Activated CD8-positive, alpha-beta memory T cell treated with anti-CD3 and anti-CD28 coated beads, Interleukin-2, amount 10 ng/mL, durations not matched to agents 7 days and 5 days (primary cell): ENCODE measurements at regions of chr1 and their contacts with region 1.

Region 1: DNA sequence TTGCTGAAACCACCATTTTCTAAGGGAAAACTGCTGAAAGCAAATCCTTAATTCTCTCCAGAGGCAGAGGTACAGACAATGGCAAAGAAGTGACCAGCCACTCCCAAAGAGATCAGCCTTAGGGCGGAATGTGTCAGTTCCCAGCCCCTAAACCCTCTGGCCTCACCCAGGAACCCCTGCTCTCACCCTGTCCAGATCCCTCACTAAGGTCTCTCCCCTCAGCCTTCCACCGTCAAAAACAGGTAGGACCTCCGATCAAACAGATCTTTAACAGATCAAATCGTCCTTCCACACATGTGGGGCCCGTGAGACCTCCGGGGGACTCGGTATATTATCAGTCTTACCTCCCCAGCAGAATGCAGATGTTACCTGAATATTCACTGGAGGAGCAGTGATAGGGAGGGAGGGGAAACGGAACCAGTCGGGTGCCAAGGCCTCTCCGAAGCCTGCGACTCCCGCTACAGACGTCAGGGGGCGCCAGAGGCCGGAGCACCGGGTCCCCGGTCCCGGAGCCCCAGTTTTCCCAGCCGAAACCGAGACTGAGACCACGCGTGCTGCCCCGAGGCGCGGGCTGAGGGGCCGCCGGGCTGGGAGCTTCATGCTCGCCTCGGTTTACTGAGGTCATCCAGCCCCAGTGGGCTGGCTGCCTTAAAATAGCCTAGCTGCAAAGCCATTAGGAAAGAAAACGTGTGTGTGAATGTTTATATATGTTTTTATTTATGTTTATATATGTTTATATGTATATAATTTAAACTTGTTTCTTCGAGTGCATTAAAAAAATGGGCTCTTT is 23.6 kb downstream of the GPA33 start:
- DNase-seq: peak; percentile 82
- ATAC-seq: peak; percentile 94
- H3K4me3 Mint-ChIP-seq: no peak overlapping the region
- H3K27ac Mint-ChIP-seq: no peak overlapping the region
- H3K4me1 Mint-ChIP-seq: peaks cover 4% of the 10 kb centered on the region
- H3K27me3 Mint-ChIP-seq: no peaks in the 10 kb centered on the region

Region 2: GRCh38 chr1:166875734-166876539 is 190.6 kb before region 1 on chr1 and contains the start of gene TADA1:
- CTCF ChIA-PET with region 1: interaction called, 222 read pairs
- DNase-seq: peak; percentile 99
- ATAC-seq: peak; percentile 93
- H3K4me3 Mint-ChIP-seq: peak within 1 kb of the TSS; percentile 82
- H3K27ac Mint-ChIP-seq: peak within 1 kb of the TSS; percentile 98
- H3K4me1 Mint-ChIP-seq: peaks cover 49% of the 10 kb centered on the region
- H3K27me3 Mint-ChIP-seq: peaks cover 7% of the 10 kb centered on the region
- total RNA-seq, gene TADA1: 18.1 to 18.8 TPM

Region 3: DNA sequence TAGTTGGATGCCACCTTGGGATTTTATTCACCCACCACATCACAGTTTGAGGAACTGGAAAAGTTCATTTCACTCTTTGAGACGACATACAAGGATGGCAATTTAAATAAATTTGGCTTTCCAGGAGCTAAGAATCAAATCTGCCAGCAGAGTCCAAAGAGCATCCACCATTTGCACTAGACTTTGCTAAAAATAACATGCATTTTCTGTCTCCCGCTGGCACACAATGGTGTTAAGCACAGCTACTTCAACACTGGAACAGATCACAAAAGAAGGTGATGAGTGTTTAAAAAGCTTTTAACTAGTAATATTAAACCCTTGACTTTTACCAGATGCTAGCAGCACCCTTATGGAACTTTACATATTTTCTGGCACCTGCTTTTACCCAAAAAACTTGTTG is 32.9 kb before region 1 on chr1:
- CTCF ChIA-PET with region 1: no interaction called
- DNase-seq: no peak
- ATAC-seq: no peak
- H3K4me3 Mint-ChIP-seq: no peak overlapping the region
- H3K27ac Mint-ChIP-seq: no peak overlapping the region
- H3K4me1 Mint-ChIP-seq: no peaks in the 10 kb centered on the region
- H3K27me3 Mint-ChIP-seq: peaks cover 14% of the 10 kb centered on the region

Region 4: DNA sequence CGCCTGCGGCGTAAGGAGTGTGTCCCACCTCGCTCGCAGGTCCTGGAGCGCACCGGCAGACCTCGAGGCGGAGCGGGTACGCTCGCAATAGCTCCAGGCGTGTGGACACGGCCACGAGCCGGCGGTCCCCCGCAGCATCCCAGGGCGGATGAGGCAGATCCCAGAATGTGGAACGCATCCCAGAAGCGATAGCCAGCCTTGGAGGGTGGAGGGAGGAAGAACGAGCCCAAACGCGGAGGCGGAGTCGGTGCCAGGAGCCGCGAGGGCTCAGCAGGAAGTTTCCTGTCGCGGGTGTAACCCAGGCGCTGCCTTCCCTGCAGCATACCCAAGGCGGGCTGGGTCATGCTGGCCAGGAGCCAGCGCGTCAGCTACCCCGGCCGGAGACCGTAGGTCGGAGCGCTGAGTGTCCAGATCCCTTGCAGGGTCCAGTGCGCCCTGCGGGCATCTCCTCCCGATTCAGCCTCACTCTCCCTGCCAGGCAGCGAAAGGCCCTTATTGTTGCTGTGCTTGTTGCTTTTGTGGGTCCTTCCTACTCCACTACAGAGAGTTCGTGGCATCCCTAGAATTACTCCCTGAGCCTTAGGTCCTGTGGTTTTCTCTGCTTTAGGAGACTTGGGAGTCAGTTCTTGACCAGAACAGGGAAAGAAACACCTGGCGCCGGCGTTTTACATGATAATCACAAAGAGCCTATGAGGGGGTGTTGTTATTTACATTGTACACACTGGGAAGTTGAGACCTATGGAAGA is 55.0 kb after region 1 on chr1:
- CTCF ChIA-PET with region 1: interaction called, 23 read pairs
- DNase-seq: peak; percentile 44
- ATAC-seq: peak; percentile 64
- H3K4me3 Mint-ChIP-seq: peak overlapping the region; percentile 70
- H3K27ac Mint-ChIP-seq: no peak overlapping the region
- H3K4me1 Mint-ChIP-seq: peaks cover 2% of the 10 kb centered on the region
- H3K27me3 Mint-ChIP-seq: peaks cover 17% of the 10 kb centered on the region

Region 5: DNA sequence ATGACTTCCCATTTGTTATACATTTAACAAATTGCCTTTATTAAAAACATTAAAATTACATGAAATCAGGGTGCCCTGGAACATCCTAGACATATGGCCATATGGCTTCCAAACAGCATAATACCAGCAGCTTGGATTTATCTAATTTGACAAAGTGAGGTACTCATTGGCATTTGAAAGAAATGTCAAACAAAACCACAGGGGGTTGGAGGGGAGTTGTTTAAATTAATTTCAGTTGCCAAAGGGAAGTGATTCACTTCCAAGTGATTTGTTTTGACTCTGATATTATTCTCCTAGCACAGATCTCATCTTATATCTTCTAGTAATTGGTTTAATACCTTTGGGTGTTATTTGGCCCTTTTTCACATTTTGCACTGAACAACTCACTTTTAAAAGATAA is 129.6 kb after region 1 on chr1:
- CTCF ChIA-PET with region 1: no interaction called
- DNase-seq: no peak
- ATAC-seq: no peak
- H3K4me3 Mint-ChIP-seq: no peak overlapping the region
- H3K27ac Mint-ChIP-seq: no peak overlapping the region
- H3K4me1 Mint-ChIP-seq: no peaks in the 10 kb centered on the region
- H3K27me3 Mint-ChIP-seq: no peaks in the 10 kb centered on the region

Region 6: DNA sequence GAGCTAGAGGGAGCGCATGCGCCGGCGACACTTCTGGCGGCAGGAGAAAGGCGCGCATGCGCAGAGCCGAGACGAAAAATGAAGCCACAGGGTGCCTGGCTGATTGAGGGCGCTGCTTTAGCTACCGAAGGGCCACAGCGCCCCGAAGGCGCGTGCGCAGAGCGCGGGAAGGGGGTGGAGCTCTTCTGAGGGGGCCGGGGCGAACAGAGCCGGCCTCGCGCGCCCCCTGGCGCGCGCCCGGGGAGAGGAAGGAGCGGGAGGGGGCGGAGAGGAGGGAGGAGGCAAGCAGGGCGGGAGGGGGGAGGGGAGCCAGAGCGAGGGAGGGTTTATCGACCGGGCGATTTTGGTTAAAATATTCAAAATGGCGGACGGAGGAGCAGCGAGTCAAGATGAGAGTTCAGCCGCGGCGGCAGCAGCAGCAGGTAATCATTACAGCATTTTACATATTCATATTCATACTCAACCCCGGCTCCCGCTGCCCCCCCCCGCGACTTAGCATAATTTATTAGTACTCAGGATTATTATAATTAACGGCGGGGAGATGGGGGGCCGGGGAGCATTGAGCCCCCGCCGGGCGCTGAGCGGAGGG is 154.1 kb after region 1 on chr1 and contains the start of gene POU2F1:
- CTCF ChIA-PET with region 1: interaction called, 22 read pairs
- DNase-seq: peak; percentile 99
- ATAC-seq: peak; percentile 86
- H3K4me3 Mint-ChIP-seq: peak within 1 kb of the TSS; percentile 86
- H3K27ac Mint-ChIP-seq: peak within 1 kb of the TSS; percentile 94
- H3K4me1 Mint-ChIP-seq: peaks cover 38% of the 10 kb centered on the region
- H3K27me3 Mint-ChIP-seq: no peaks in the 10 kb centered on the region
- total RNA-seq, gene POU2F1: 20.7 to 24.6 TPM